Activated CD8-positive, alpha-beta memory T cell treated with anti-CD3 and anti-CD28 coated beads, Interleukin-2, amount 10 ng/mL, durations not matched to agents 7 days and 5 days (primary cell): ENCODE measurements at regions of chr7 and their contacts with region 1.

Region 1: DNA sequence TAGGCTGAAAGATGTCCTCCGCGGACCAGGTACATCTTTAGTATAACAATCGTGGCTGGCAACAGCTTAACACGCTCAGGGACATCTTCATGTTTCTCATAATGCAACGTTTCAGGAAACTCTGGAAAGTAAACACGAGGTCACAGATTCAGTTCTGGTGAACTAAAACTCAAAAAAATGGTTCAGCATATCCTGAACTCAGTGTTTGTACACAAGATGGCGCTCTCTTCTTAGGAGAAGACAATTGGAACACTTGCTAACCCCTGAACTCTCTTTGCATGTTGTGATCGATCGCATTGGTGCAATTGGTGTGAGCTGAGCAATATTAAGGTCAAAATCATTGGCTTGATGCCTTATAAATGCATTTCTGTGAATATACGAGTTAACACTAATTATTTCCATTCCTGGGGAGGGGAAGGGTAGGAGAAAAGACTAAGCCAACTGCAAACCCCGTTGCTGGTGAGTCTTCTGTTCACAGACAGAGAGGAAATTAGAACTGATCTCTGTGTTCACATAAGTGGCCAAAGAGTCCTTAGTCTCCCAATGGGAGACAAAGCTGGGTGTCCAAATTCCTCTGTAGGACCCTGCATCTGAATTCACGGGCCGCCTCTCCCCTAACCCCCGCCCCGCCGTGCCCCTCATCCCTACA is 52.6 kb upstream of the FAM180A start:
- DNase-seq: no peak
- ATAC-seq: peak; percentile 67
- H3K4me3 Mint-ChIP-seq: no peak overlapping the region
- H3K27ac Mint-ChIP-seq: no peak overlapping the region
- H3K4me1 Mint-ChIP-seq: peaks cover 5% of the 10 kb centered on the region
- H3K27me3 Mint-ChIP-seq: peaks cover 12% of the 10 kb centered on the region

Region 2: GRCh38 chr7:135650831-135651573 is 150.2 kb before region 1 on chr7:
- CTCF ChIA-PET with region 1: no interaction called
- DNase-seq: no peak
- ATAC-seq: no peak
- H3K4me3 Mint-ChIP-seq: no peak overlapping the region
- H3K27ac Mint-ChIP-seq: no peak overlapping the region
- H3K4me1 Mint-ChIP-seq: no peaks in the 10 kb centered on the region
- H3K27me3 Mint-ChIP-seq: no peaks in the 10 kb centered on the region

Region 3: GRCh38 chr7:135817583-135817982 is 16.4 kb after region 1 on chr7:
- CTCF ChIA-PET with region 1: no interaction called
- DNase-seq: no peak
- ATAC-seq: no peak
- H3K4me3 Mint-ChIP-seq: no peak overlapping the region
- H3K27ac Mint-ChIP-seq: no peak overlapping the region
- H3K4me1 Mint-ChIP-seq: no peaks in the 10 kb centered on the region
- H3K27me3 Mint-ChIP-seq: no peaks in the 10 kb centered on the region

Region 4: GRCh38 chr7:136009488-136010079 is 208.4 kb after region 1 on chr7:
- CTCF ChIA-PET with region 1: interaction called, 38 read pairs
- DNase-seq: no peak
- ATAC-seq: no peak
- H3K4me3 Mint-ChIP-seq: no peak overlapping the region
- H3K27ac Mint-ChIP-seq: no peak overlapping the region
- H3K4me1 Mint-ChIP-seq: peaks cover 7% of the 10 kb centered on the region
- H3K27me3 Mint-ChIP-seq: peaks cover 14% of the 10 kb centered on the region